Heart right ventricle (tissue), 16 donors: ENCODE measurements at regions of chr12 and their contacts with region 1.

Region 1: DNA sequence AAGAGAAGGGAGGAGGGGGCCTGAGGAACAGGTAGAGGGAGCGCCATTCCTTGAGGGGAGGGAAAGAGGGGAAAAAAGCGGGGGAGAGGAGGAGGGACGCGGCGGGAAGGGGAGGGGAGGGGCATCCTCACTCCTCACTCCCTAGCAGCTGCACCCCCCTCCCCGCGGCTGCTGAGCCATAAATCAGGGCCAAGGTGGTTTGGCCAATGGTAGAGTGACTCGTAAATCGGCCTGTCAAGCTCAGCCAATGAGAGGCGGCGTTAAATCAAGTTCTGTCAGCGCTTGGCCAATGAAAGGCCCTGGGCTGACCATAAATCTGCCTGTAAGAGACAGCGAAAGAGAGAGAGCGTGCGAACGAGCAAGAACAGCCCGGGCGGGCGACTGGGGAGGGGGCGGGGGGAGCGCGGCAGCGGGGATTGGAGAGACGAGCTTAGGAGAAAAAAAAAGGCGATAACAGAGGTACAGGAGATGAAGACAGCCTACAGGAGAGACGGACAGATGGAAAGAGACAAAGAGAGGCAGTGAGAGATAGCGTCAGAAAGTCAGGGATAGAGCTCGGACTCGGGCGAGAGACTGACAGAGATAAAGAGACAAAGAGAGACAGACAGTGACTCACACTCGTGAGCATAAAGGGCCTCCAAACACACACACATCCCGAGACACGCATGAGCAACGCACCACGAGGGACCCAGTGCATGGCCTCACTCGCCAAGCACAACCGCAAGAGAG is 5.1 kb downstream of the GPR84 start:
- DNase-seq: peak; percentile 90 to 98
- ATAC-seq: peak; percentile 96 to 98 (median 97)
- H3K4me3 ChIP-seq: peak overlapping the region; percentile 34 to 76 (median 64)
- H3K27ac ChIP-seq: peak overlapping the region; percentile 67 to 95 (median 88)
- H3K4me1 ChIP-seq: peaks cover 4 to 44% (median 17%) of the 10 kb centered on the region in 9 donors
- H3K27me3 ChIP-seq: no peaks in the 10 kb centered on the region
- CTCF ChIP-seq: no peak

Region 2: GRCh38 chr12:54017878-54018467 is 341.2 kb before region 1 on chr12:
- intact Hi-C with region 1: loop called in 1 of 10 experiments (anchors 10 kb)
- DNase-seq: peak; percentile 40 to 75
- ATAC-seq: peak; percentile 80 to 89 (median 86)
- H3K4me3 ChIP-seq: peak overlapping the region; percentile 16 to 53 (median 49)
- H3K27ac ChIP-seq: peak overlapping the region in 3 of 10 donors; percentile 6 to 50 (median 16)
- H3K4me1 ChIP-seq: peaks cover 5 to 42% (median 31%) of the 10 kb centered on the region in 9 donors
- H3K27me3 ChIP-seq: peaks cover 22 to 100% (median 96%) of the 10 kb centered on the region in 7 donors
- CTCF ChIP-seq: no peak

Region 3: DNA sequence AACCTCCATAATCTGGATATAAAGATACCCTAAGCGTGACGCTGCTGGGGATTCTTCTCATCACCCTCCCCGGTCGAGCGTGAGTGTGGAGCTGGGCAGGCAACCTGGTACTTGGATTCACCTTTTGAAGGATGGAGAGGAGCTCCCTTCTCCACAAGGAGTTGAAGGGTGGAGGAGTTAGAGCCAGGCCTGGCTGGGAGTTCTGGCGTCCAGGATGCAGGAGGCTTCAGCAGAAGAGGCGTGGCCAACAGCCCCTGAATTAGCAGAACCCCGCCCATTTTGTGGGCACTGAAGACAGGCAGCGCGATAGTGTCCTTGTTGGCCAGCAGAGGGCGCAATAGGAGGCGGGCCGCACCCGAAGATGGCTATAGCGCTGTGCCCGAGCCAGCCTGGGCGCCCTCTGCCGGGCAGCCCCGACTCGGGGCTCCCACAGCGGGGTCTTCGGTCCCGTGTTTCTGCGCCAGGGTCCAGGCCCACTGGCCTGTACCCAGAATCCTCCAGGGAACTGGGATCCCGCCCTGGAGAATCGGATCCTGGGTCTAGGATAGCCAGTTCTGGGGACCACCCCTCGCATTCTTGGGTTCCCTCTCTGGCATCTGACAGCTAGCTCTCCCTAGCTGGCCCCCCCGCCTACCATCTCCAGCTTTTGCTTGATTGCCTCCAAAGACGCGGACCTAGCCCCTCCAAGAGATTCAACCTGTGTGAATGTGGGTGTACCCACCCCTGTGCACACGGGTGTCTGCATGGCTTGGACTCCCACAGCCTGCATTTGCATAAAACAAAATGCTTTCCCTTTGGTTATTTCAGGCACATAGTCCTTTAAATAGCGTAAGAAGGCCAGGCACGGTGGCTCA is 144.4 kb before region 1 on chr12:
- intact Hi-C with region 1: loop called in 2 of 10 experiments (anchors 1 to 5 kb)
- DNase-seq: peak; percentile 82 to 87
- ATAC-seq: peak; percentile 79 to 92 (median 88)
- H3K4me3 ChIP-seq: peak overlapping the region in 7 of 10 donors; percentile 7 to 36 (median 23)
- H3K27ac ChIP-seq: no peak overlapping the region
- H3K4me1 ChIP-seq: peaks cover 2 to 40% (median 24%) of the 10 kb centered on the region in 9 donors
- H3K27me3 ChIP-seq: peaks cover 0 to 85% (median 37%) of the 10 kb centered on the region in 7 donors
- CTCF ChIP-seq: peak; percentile 91 to 100 (median 98)

Region 4: DNA sequence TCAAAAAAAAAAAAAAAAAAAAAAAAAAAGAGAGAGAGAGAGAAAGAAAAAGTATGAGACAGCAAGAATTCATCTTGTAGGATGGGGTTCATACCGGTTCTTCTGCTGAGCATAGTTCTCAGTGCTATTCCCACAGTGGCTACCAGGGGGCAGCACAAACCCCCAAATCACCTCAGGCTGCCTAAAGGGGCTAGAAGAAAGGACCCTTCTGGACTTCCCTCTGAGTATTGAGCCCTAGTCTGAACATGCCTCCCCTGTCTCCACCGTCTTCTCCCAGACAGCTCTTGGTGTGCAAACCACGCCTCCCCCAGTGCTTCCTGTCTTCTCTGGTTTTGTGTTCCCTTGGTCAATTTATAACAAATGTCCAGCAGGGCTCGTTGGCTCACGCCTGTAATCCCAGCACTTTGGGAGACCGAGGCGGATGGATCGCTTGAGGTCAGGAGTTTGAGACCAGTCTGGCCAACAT is 139.1 kb before region 1 on chr12:
- intact Hi-C with region 1: loop called in 9 of 10 experiments (anchors 1 to 10 kb)
- DNase-seq: peak; percentile 54 to 64
- ATAC-seq: peak; percentile 14 to 77 (median 55)
- H3K4me3 ChIP-seq: no peak overlapping the region
- H3K27ac ChIP-seq: no peak overlapping the region
- H3K4me1 ChIP-seq: peaks cover 0 to 38% (median 24%) of the 10 kb centered on the region in 9 donors
- H3K27me3 ChIP-seq: peaks cover 0 to 36% (median 9%) of the 10 kb centered on the region in 7 donors
- CTCF ChIP-seq: peak; percentile 59 to 82 (median 76)

Region 5: GRCh38 chr12:54294152-54294952 is 64.8 kb before region 1 on chr12:
- intact Hi-C with region 1: loop called in 9 of 10 experiments (anchors 2 to 10 kb)
- DNase-seq: peak in 1 of 2 donors; percentile 58
- ATAC-seq: peak in 7 of 8 donors; percentile 32 to 70 (median 59)
- H3K4me3 ChIP-seq: peak overlapping the region in 1 of 10 donors; percentile 20
- H3K27ac ChIP-seq: peak overlapping the region in 1 of 10 donors; percentile 38
- H3K4me1 ChIP-seq: peaks cover 0 to 8% (median 0%) of the 10 kb centered on the region in 9 donors
- H3K27me3 ChIP-seq: peaks cover 4 to 13% (median 9%) of the 10 kb centered on the region in 7 donors
- CTCF ChIP-seq: peak in 8 of 9 donors; percentile 10 to 75 (median 63)

Region 6: DNA sequence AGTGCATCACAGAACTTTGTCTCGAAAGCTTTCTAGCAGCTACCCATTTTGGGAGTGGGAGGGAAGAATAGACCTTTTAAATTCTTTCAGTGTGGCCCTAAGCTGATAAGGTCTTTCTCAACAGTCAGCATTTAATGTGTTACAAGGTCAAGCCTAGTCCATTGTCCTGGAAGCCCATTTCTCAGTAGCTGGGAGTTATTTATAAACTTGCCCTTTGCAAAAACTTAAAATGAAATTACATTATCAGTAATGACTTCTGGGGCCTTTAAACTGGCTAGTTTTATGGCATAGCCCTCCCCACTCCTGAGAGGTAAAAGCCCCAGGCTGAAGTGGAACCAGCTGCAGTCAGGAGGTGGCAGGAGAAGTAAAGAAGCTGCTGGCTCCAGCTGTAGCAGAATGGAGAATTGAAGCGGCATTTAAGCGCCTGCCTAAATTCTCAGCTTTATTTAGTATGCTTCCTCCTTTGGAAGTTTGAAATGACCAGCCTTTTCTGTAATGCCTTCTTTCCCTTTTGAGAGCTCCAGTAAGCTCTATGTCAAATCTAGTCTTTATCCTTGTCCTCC is 21.8 kb before region 1 on chr12:
- intact Hi-C with region 1: loop called in 1 of 10 experiments (anchors 2 kb)
- DNase-seq: no peak
- ATAC-seq: peak; percentile 64 to 88 (median 78)
- H3K4me3 ChIP-seq: no peak overlapping the region
- H3K27ac ChIP-seq: peak overlapping the region in 9 of 10 donors; percentile 24 to 78 (median 69)
- H3K4me1 ChIP-seq: peaks cover 16 to 57% (median 32%) of the 10 kb centered on the region in 9 donors
- H3K27me3 ChIP-seq: no peaks in the 10 kb centered on the region
- CTCF ChIP-seq: peak in 5 of 9 donors; percentile 14 to 56 (median 43)